Activated CD4-positive, alpha-beta T cell treated with anti-CD3 and anti-CD28 coated beads, Interleukin-2, amount 10 ng/mL, durations not matched to agents 24 days and 14 days (primary cell): ENCODE measurements at regions of chr3 and their contacts with region 1.

Region 1: GRCh38 chr3:106176734-106177133 is 307.9 kb upstream of the CBLB start:
- DNase-seq: peak; percentile 91
- H3K4me3 Mint-ChIP-seq: peak overlapping the region; percentile 77
- H3K27ac Mint-ChIP-seq: peak overlapping the region; percentile 93
- H3K4me1 Mint-ChIP-seq: peaks cover 53% of the 10 kb centered on the region
- H3K27me3 Mint-ChIP-seq: no peaks in the 10 kb centered on the region

Region 2: GRCh38 chr3:105366326-105367062 is 810.2 kb before region 1 on chr3 and contains the start of gene ALCAM:
- intact Hi-C with region 1: loop called (anchors 2 kb)
- DNase-seq: peak; percentile 95
- H3K4me3 Mint-ChIP-seq: peak within 1 kb of the TSS; percentile 94
- H3K27ac Mint-ChIP-seq: peak within 1 kb of the TSS; percentile 99
- H3K4me1 Mint-ChIP-seq: peaks cover 45% of the 10 kb centered on the region
- H3K27me3 Mint-ChIP-seq: peaks cover 25% of the 10 kb centered on the region
- total RNA-seq, gene ALCAM: 26.3 and 26.5 TPM in 2 replicates

Region 3: GRCh38 chr3:105827959-105828358 is 348.8 kb before region 1 on chr3:
- intact Hi-C with region 1: loop called (anchors 2 kb)
- DNase-seq: peak; percentile 68
- H3K4me3 Mint-ChIP-seq: peak overlapping the region; percentile 60
- H3K27ac Mint-ChIP-seq: peak overlapping the region; percentile 100
- H3K4me1 Mint-ChIP-seq: peaks cover 73% of the 10 kb centered on the region
- H3K27me3 Mint-ChIP-seq: no peaks in the 10 kb centered on the region

Region 4: DNA sequence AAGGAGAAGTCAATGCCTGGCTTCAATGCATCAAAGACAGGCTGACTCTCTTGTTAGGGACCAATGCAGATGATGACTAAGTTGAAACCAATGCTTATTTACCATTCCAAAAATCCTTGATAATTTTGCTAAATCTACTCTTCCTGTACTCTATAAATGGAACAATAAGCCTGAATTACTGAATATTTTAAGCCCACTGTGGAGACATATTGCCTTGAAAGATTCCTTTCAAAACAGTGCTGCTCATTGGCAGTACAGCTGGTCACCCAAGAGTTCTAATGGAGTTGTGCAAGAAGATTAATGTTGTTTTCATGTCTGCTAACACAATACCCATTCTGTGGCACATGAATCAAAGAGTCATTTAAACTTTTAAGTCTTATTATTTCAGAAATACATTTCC is 126.9 kb before region 1 on chr3:
- intact Hi-C with region 1: loop called (anchors 1 kb)
- DNase-seq: no peak
- H3K4me3 Mint-ChIP-seq: no peak overlapping the region
- H3K27ac Mint-ChIP-seq: no peak overlapping the region
- H3K4me1 Mint-ChIP-seq: peaks cover 9% of the 10 kb centered on the region
- H3K27me3 Mint-ChIP-seq: no peaks in the 10 kb centered on the region

Region 5: DNA sequence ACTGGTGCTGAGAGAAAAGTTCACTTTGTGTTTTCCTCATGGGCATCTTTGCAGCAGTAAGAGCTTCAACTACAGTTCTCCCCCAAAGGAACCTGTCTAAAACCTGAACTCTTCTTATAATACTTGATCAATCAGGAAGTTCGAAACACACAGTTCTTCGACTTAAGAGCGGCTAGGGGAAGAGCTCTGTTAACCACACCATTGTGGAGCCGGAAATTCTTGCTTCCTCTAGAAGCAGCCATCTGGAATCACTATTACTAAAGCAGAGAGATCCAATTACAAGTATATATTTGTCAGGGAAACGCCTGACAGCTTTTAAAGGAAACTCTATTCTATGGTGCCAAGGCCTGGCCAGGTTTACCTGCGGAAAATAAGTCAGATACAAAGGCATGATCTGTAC is 29.4 kb after region 1 on chr3:
- intact Hi-C with region 1: loop called (anchors 1 kb)
- DNase-seq: peak; percentile 75
- H3K4me3 Mint-ChIP-seq: peak overlapping the region; percentile 65
- H3K27ac Mint-ChIP-seq: peak overlapping the region; percentile 97
- H3K4me1 Mint-ChIP-seq: peaks cover 39% of the 10 kb centered on the region
- H3K27me3 Mint-ChIP-seq: no peaks in the 10 kb centered on the region

Region 6: DNA sequence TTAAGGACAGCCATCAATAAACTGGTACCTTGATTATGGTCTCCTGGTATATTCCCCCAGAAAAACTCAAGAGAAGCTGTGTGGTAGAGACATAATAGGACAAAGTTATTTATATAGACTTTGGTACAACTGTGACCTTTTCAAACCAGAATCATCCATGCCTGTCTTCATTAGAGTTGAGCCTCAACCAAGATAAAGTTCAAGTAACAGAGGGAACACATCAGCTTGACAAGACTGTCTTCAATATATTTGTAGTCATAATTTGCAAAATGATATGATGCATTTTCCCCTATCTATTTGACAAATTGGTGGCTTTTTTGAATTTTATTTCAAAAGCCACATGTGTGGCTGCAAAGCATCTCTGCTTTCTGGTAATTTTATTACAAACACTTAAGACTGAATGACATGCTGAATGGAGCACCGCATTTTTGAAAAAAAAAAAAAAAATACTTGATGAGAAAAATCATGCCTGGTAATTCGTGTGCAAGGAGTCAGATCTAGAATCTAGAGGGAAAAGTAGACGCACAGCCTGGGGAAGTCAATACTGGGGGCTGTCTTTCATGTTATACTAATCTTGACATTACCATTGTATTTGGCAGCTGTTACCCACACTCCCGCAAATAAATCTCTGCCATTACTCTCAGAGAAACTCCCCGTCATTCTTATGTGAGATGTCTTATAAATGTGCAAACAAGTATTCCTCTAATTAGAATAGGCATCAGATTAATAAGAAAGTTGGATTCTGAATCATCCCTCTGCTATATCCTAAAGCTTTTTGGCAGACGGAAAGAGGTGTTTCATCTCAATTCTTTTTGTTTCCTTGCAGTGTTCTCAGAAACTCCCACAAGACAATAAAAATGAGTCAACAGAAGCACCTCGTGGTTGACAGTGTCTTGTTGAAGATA is 246.8 kb after region 1 on chr3:
- intact Hi-C with region 1: loop called (anchors 1 kb)
- DNase-seq: no peak
- H3K4me3 Mint-ChIP-seq: peak overlapping the region; percentile 13
- H3K27ac Mint-ChIP-seq: peak overlapping the region; percentile 85
- H3K4me1 Mint-ChIP-seq: peaks cover 43% of the 10 kb centered on the region
- H3K27me3 Mint-ChIP-seq: no peaks in the 10 kb centered on the region

Region 7: DNA sequence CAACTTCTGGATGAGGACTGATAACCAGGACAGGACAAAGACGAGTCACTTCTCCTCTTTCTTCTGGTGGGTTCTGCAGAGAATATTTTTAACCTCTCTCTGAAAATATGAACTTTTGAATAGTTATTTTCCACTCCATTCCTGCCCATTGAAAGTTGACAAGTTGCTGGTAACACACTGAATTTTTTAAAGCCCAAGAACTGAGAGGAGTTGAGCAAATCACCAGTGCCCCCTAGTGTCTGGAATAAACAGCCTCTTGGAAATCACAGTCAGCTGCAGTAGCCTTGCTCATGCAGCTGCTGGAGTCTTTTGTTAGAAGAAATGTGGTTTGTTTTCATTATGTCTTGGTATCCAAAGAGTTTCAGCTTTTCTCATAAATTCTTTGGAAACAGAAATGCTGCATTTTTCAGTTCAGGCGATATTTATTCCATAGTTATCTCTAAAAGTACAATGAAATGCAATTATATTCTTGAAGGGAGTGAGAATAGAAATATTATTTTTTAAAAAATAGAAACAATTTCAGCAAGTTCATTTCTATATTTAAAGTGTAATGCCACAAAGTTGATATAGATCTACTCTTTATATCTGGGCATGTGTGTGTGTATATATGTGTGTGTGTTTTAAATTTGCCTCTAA is 433.1 kb after region 1 on chr3:
- intact Hi-C with region 1: loop called (anchors 1 kb)
- DNase-seq: peak; percentile 90
- H3K4me3 Mint-ChIP-seq: no peak overlapping the region
- H3K27ac Mint-ChIP-seq: peak overlapping the region; percentile 83
- H3K4me1 Mint-ChIP-seq: peaks cover 24% of the 10 kb centered on the region
- H3K27me3 Mint-ChIP-seq: no peaks in the 10 kb centered on the region